Left ventricle myocardium superior (tissue), 1 donor: ENCODE measurements at regions of chr2 and their contacts with region 1.

Region 1: GRCh38 chr2:211331736-211332135 is 775.3 kb downstream of the CPS1 start:
- DNase-seq: no peak
- ATAC-seq: no peak

Region 2: GRCh38 chr2:211228559-211228958 is 103.2 kb before region 1 on chr2:
- intact Hi-C with region 1: no loop called
- DNase-seq: no peak
- ATAC-seq: no peak

Region 3: DNA sequence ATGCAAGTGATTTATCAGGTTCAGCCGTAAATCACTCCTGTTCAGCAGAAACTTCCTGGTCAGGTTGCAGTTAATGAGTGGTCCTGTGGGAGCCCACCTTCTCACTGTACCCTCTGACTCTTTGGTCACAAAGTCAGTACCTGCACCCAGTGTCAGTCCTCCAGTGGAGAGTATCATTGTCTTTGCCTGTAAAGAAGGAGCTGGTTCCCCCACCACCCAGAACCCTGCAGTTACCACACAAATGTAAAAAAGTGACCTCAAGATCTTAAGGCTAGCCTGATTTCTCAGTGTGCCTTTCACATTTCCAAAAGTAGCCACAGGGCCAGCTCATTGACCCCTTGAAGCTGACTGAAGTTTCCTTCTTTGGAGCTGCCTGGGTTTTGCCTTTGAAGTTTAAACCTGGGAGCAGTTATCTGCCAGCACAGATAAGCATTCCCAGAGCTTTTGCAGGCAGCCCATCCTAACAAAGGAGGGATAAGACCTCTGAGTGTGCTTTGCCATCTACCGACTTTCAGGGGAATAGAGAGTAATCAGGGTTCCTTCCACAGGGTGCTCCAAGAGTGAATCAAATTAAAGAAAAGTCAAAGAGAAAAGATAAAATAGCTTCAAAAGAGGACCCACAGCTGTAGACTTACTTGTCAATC is 50.2 kb before region 1 on chr2:
- intact Hi-C with region 1: no loop called
- DNase-seq: no peak
- ATAC-seq: no peak

Region 4: DNA sequence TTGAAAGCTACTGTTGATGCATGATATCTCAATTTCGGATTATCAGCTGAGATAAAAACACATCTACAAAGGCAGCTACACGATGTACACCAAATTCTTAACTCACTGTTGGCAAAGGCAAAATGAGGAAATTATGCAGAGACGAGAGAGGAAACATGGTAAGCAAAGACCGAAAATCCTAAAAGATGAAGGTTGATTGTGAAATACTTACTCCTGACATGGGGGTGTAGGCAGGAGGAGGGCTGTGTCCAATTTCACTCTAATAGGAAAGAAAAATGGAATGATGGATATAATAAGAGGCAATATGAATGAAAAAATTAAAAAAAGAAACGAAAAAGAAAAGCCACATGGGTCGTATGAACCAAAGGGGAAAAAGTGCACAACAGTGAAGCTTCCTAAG is 56.0 kb after region 1 on chr2:
- intact Hi-C with region 1: loop called (anchors 2 kb)
- DNase-seq: no peak
- ATAC-seq: no peak